Prostate gland (tissue), 2 donors: ENCODE measurements at regions of chr12 and their contacts with region 1.

Region 1: GRCh38 chr12:64083285-64084210 is 138.5 kb downstream of the KICS2 start:
- DNase-seq: peak; percentile 92
- H3K4me3 ChIP-seq: no peak overlapping the region
- H3K27ac ChIP-seq: peak overlapping the region; percentile 64 to 73
- H3K4me1 ChIP-seq: peaks cover 7% of the 10 kb centered on the region
- H3K27me3 ChIP-seq: no peaks in the 10 kb centered on the region
- CTCF ChIP-seq: no peak
- POLR2A ChIP-seq: no peak

Region 2: GRCh38 chr12:64042911-64043310 is 40.6 kb before region 1 on chr12:
- intact Hi-C with region 1: loop called (anchors 5 kb)
- DNase-seq: no peak
- H3K4me3 ChIP-seq: no peak overlapping the region
- H3K27ac ChIP-seq: no peak overlapping the region
- H3K4me1 ChIP-seq: no peaks in the 10 kb centered on the region
- H3K27me3 ChIP-seq: no peaks in the 10 kb centered on the region
- CTCF ChIP-seq: no peak
- POLR2A ChIP-seq: no peak

Region 3: GRCh38 chr12:64120571-64120970 is 37.0 kb after region 1 on chr12:
- intact Hi-C with region 1: no loop called
- DNase-seq: no peak
- H3K4me3 ChIP-seq: no peak overlapping the region
- H3K27ac ChIP-seq: no peak overlapping the region
- H3K4me1 ChIP-seq: no peaks in the 10 kb centered on the region
- H3K27me3 ChIP-seq: no peaks in the 10 kb centered on the region
- CTCF ChIP-seq: no peak
- POLR2A ChIP-seq: no peak